ENCODE measurements at regions of chr3 and their contacts with region 1.

Region 1: DNA sequence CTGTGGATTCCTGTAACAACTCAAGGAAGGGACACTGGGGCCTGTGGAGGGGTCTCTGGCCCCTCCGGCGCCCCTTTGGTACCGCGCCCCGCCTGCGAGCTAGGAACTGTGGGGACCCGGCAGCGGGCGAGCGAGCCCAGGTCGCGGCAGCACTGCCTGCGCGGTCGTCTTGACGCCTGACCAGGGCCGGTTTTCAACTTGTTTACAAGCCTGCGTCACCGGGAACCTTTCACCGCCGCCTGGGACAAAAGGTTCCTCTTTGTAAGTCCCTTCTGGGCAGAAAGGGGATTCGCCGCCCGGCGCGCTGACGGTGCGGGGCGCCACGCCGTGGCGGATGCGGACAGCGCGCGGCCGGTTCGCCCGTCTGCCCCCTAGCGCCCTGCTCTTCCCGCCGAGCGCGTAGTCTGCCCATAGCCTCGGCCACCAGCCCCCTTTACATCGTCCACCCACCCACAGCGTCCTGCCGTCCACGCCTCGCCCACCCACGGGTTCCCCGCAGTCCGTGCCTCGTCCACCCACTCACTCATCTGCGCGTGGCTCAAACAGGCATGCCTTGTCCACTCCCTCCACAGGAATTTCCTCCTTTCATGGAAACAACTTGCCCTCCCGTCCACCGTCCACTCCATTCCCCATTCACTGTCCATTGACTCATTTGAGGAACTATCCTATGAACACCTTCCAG is 5.5 kb upstream of the CFAP100 start:
- DNase-seq: peak; percentile 76 to 92 (median 90)
- H3K4me3 ChIP-seq: peak overlapping the region; percentile 41 to 85 (median 64)
- H3K27ac ChIP-seq: peak overlapping the region; percentile 63 to 95 (median 88)
- H3K27me3 ChIP-seq: no peaks in the 10 kb centered on the region
- CTCF ChIP-seq: peak; percentile 58 to 100 (median 99)

Region 2: DNA sequence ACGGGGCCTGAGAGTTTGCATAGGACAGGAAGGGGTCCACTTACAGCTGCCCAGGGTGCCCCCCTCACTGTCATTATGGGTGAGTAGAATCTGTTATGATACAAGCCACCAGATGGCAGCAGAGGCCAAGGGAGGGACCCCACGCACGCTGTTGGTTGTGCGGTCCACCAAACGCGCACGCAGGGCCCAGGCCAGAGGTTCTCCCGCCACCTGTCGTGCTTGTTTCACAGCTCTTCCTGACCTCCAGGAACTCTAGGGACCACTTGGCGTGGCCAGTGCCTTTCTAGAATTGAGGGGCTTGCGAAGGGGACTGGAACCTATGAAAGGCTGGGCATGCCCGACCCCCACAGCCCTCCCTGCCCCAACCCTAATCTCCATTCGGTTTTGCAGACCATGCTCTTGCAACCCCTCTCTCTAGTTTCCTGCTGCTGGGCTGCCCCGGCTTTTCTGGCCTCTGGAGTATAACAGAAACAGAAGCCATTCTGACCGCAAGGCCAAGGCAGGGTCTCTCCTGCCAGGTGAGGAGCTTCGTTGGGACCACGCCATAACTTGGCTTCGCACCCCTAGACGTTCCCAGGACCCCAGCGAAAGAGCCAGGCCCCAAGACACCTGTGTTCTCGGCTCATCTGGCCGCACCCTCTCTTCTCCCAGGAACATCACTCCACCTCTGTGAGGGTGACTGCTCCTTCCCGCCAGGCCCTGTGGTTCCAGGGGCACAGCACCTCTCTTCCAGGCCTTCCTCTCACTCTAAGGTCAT is 254.9 kb before region 1 on chr3:
- intact Hi-C with region 1: loop called (anchors 5 kb)
- DNase-seq: peak; percentile 51 to 80 (median 65)
- H3K4me3 ChIP-seq: peak overlapping the region in 1 of 59 donors; percentile 31
- H3K27ac ChIP-seq: no peak overlapping the region
- H3K27me3 ChIP-seq: peaks cover 0 to 7% (median 0%) of the 10 kb centered on the region in 45 donors
- CTCF ChIP-seq: peak; percentile 60 to 90 (median 81)

Region 3: DNA sequence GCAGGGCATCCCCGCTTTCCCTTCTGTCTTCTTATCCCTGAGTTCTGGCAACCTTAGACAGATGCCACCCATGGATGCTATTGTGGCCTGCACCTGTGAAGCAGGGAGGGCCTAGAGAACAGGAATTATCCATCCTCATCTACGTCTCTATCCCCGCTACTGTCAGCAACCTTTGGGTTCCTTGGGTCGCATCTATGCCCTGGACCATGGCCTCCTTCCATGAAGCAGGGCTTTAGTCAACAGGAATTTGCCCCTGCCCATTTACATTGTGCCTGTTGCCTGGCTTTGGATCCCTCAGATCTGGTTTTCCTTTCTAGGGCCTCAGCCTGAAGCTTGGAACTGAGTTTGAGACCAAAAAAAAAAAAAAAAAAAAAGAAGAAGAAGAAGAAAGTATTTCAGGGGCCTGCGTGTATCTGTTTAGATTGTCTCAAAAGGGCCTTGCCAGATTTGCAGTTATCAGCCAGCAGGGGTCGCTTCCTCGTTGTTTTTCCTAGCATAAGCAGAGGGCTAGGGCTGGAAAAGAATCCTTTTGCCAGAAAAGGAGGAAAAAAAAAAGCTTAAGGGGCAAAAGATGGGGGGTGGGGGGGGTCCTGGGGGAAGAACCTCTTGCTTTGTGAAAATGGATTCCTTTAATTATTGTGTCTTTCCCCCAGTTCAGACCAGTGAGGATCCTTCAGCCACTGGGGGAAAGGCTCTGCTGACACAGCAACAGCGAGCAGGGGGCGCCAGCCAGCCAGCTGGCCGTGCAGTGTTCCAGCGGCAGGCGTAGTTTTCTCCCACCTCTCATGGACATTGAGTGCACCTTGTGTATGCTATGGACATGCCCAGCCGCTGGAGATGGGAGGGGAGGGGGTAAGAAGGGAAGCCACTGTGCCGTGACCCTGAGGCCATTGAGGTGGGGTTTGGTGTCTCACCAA is 143.2 kb before region 1 on chr3:
- intact Hi-C with region 1: loop called in 1 of 2 experiments (anchors 1 kb)
- DNase-seq: peak in 8 of 10 donors; percentile 34 to 82 (median 64)
- H3K4me3 ChIP-seq: peak overlapping the region in 3 of 59 donors; percentile 18 to 32 (median 24)
- H3K27ac ChIP-seq: peak overlapping the region in 1 of 59 donors; percentile 44
- H3K27me3 ChIP-seq: no peaks in the 10 kb centered on the region
- CTCF ChIP-seq: peak in 55 of 56 donors; percentile 35 to 77 (median 64)

Region 4: GRCh38 chr3:126259411-126260391 is 129.6 kb before region 1 on chr3:
- intact Hi-C with region 1: loop called (anchors 1 to 5 kb)
- DNase-seq: peak; percentile 18 to 84 (median 70)
- H3K4me3 ChIP-seq: peak overlapping the region in 5 of 59 donors; percentile 1 to 31 (median 21)
- H3K27ac ChIP-seq: peak overlapping the region in 3 of 59 donors; percentile 0 to 44 (median 15)
- H3K27me3 ChIP-seq: no peaks in the 10 kb centered on the region
- CTCF ChIP-seq: peak; percentile 43 to 96 (median 82)

Region 5: DNA sequence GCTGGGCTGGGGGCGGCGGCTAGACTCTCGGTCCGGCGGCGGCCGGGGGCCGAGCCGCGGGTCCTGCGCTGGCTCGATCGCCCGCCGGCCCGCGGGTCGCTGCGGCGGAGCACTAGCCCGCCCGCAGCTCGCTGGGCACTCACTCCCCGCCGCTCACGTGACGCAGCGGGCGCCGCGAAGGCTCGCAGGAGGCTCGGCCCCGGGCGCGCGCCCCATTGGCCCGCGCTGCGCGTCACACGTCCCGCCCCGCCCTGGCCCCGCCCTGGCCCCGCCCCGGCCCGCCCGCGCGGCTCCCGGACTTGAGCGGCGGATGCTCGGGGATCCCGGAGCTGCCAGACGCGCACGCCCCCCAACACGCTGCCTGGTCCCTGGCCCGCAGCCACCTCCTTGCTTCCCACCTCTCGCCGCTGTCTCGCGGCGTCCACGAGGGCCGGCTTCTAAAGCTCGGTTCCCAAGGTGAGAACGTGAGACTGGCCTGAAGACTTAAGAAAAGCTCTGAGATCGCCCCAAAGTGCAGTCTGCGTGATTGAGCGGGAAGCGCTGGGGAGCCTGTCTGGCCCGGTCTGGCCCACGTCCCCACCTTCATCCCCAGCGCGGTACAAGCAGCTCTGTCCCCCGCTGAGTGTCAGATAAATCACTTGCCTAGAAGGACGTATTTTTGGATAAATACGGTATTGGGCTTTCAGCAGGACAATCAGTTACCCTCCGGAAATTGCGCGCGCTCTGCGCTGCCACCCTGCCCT is 31.8 kb before region 1 on chr3 and contains the start of gene KLF15:
- intact Hi-C with region 1: loop called (anchors 1 to 2 kb)
- DNase-seq: peak; percentile 82 to 96 (median 90)
- H3K4me3 ChIP-seq: peak within 1 kb of the TSS; percentile 61 to 95 (median 82)
- H3K27ac ChIP-seq: peak within 1 kb of the TSS; percentile 90 to 100 (median 98)
- H3K27me3 ChIP-seq: no peaks in the 10 kb centered on the region
- CTCF ChIP-seq: peak in 1 of 56 donors; percentile 14
- total RNA-seq, gene KLF15: 11.7 to 112 (median 39.5) TPM